K562 (cell line): ENCODE measurements at regions of chr18 and their contacts with region 1.

Region 1: GRCh38 chr18:58043491-58044379 is at the start of gene NEDD4L:
- DNase-seq: peak; percentile 81 to 91 (median 84)
- ATAC-seq: peak; percentile 82
- H3K4me3 ChIP-seq: peak within 1 kb of the TSS; percentile 71
- H3K27ac ChIP-seq: peak within 1 kb of the TSS; percentile 76
- H3K4me1 ChIP-seq: peaks cover 22 to 29% of the 10 kb centered on the region in 2 experiments; a peak in 4 of 5 replicates
- H3K27me3 ChIP-seq: no peaks in the 10 kb centered on the region
- CTCF ChIP-seq: peak; percentile 70 to 81 (median 79)
- EP300 ChIP-seq: no peak
- POLR2A ChIP-seq: 0 out of 2 replicates have a peak, but pooled peaks have one; percentile 23
- RAD21 ChIP-seq: peak; percentile 85 to 89
- polyA plus RNA-seq, gene NEDD4L: 8.1 to 11.1 TPM

Region 2: DNA sequence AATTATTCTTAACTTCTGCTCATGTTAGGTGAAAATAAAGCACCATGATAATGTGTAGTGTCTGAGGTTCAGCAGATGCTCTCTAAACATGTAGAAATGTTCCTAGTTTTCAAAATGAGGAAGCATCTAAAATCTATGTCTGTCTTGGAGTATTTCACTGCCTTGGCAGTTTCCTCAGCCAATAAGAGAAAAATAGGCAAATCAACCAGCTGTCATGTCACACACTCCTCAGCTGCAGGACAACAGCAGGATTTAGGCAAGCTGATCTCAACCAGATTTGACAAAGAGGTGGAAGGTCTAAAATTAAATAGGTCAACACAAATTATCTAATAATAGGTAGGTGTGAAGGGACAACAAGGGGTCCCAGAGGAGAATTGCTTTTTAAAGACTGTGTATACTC is 1061.0 kb before region 1 on chr18:
- CTCF ChIA-PET with region 1: no interaction called
- POLR2A ChIA-PET with region 1: no interaction called
- in situ Hi-C with region 1: no loop called
- intact Hi-C with region 1: no loop called
- DNase-seq: no peak
- ATAC-seq: no peak
- H3K4me3 ChIP-seq: no peak overlapping the region
- H3K27ac ChIP-seq: no peak overlapping the region
- H3K4me1 ChIP-seq: no peaks in the 10 kb centered on the region
- H3K27me3 ChIP-seq: no peaks in the 10 kb centered on the region
- CTCF ChIP-seq: no peak
- EP300 ChIP-seq: no peak
- POLR2A ChIP-seq: no peak
- RAD21 ChIP-seq: no peak

Region 3: DNA sequence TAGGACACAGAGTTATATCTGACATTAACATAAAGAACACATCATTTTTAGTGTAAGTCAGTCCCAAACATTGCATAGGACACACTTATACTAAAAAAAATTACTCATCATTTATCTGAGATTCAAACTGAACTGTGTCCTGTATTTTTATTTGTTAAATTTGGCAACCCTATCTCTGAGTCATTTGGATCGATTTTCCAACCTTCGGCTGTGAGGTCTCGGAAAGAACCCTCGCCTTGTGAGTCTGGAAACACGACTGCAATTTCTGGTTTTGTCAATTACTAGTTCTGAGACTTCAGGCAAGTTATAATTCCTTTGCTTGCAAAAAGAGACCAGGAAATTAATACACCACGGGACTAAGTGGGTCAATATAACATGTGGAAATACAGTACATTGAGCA is 254.6 kb before region 1 on chr18:
- CTCF ChIA-PET with region 1: no interaction called
- POLR2A ChIA-PET with region 1: no interaction called
- in situ Hi-C with region 1: no loop called
- intact Hi-C with region 1: no loop called
- DNase-seq: no peak
- ATAC-seq: no peak
- H3K4me3 ChIP-seq: no peak overlapping the region
- H3K27ac ChIP-seq: no peak overlapping the region
- H3K4me1 ChIP-seq: peaks cover 4 to 11% of the 10 kb centered on the region in 2 experiments; a peak in 3 of 5 replicates
- H3K27me3 ChIP-seq: no peaks in the 10 kb centered on the region
- CTCF ChIP-seq: no peak
- EP300 ChIP-seq: no peak
- POLR2A ChIP-seq: no peak
- RAD21 ChIP-seq: no peak

Region 4: DNA sequence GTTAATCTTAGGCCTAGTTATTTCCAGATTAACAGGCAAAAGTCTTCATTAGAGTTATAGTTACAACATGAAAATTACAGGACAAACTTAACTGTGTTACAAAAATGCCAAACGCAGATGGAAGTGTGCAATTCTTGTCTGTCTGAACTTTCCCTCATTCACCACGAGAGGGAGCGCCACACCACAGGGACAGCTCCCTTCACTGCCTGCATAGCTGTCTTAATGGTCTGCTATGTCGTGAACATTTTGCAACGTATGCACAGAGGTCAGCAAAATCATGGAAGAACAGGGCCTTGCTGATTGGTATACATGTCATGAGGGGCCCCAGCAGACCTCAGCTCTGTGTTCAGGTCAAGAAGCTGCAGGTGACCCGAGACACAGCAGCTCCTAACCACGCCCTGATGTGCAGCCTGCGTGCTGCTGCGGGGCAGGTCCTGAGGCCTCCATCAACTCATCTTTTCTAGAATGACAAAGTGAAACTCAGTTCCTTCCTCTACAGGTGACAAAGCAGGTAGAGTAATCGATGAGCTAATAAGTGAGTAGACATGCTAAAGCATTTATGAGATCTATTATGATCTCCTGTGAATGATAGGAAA is 161.8 kb before region 1 on chr18:
- CTCF ChIA-PET with region 1: no interaction called
- POLR2A ChIA-PET with region 1: no interaction called
- in situ Hi-C with region 1: no loop called
- intact Hi-C with region 1: loop called (anchors 5 kb)
- DNase-seq: peak; percentile 33 to 74 (median 40)
- ATAC-seq: peak; percentile 93
- H3K4me3 ChIP-seq: no peak overlapping the region
- H3K27ac ChIP-seq: no peak overlapping the region
- H3K4me1 ChIP-seq: no peaks in the 10 kb centered on the region
- H3K27me3 ChIP-seq: no peaks in the 10 kb centered on the region
- CTCF ChIP-seq: peak; percentile 77 to 82 (median 81)
- EP300 ChIP-seq: no peak
- POLR2A ChIP-seq: no peak
- RAD21 ChIP-seq: peak; percentile 81 to 89

Region 5: GRCh38 chr18:57970356-57971080 is 73.2 kb before region 1 on chr18:
- CTCF ChIA-PET with region 1: no interaction called
- POLR2A ChIA-PET with region 1: no interaction called
- in situ Hi-C with region 1: no loop called
- intact Hi-C with region 1: loop called (anchors 5 kb)
- DNase-seq: peak; percentile 13 to 30 (median 18)
- ATAC-seq: peak; percentile 85
- H3K4me3 ChIP-seq: no peak overlapping the region
- H3K27ac ChIP-seq: no peak overlapping the region
- H3K4me1 ChIP-seq: no peaks in the 10 kb centered on the region; a peak in 1 of 5 replicates
- H3K27me3 ChIP-seq: no peaks in the 10 kb centered on the region
- CTCF ChIP-seq: peak; percentile 68 to 80 (median 74)
- EP300 ChIP-seq: no peak
- POLR2A ChIP-seq: no peak
- RAD21 ChIP-seq: peak; percentile 33 to 56; a peak in 2 of 4 replicates

Region 6: GRCh38 chr18:58128381-58129374 is 84.9 kb after region 1 on chr18:
- CTCF ChIA-PET with region 1: no interaction called
- POLR2A ChIA-PET with region 1: no interaction called
- in situ Hi-C with region 1: loop called (anchors 5 kb)
- intact Hi-C with region 1: no loop called
- DNase-seq: no peak
- ATAC-seq: no peak
- H3K4me3 ChIP-seq: no peak overlapping the region
- H3K27ac ChIP-seq: no peak overlapping the region
- H3K4me1 ChIP-seq: no peaks in the 10 kb centered on the region
- H3K27me3 ChIP-seq: no peaks in the 10 kb centered on the region
- CTCF ChIP-seq: no peak
- EP300 ChIP-seq: no peak
- POLR2A ChIP-seq: no peak
- RAD21 ChIP-seq: no peak

Region 7: GRCh38 chr18:58180738-58181353 is 137.1 kb after region 1 on chr18:
- CTCF ChIA-PET with region 1: interaction called, 8 read pairs
- POLR2A ChIA-PET with region 1: no interaction called
- in situ Hi-C with region 1: no loop called
- intact Hi-C with region 1: loop called (anchors 2 kb)
- DNase-seq: peak; percentile 51 to 62 (median 57)
- ATAC-seq: peak; percentile 66
- H3K4me3 ChIP-seq: no peak overlapping the region
- H3K27ac ChIP-seq: no peak overlapping the region
- H3K4me1 ChIP-seq: peaks cover 0 to 6% of the 10 kb centered on the region in 2 experiments; a peak in 3 of 5 replicates
- H3K27me3 ChIP-seq: no peaks in the 10 kb centered on the region
- CTCF ChIP-seq: peak; percentile 54 to 77 (median 73)
- EP300 ChIP-seq: no peak
- POLR2A ChIP-seq: no peak
- RAD21 ChIP-seq: peak; percentile 59 to 75